ENCODE measurements at regions of chr7 and their contacts with region 1.

Region 1: GRCh38 chr7:120272261-120272660 is 714 bp upstream of the KCND2 start:
- DNase-seq: peak; percentile 39 to 44
- H3K4me3 ChIP-seq: peak overlapping the region; percentile 61
- H3K27ac ChIP-seq: no peak overlapping the region
- H3K4me1 ChIP-seq: no peaks in the 10 kb centered on the region
- H3K27me3 ChIP-seq: 0 out of 2 replicates have a peak, but pooled peaks cover 4% of the 10 kb centered on the region
- CTCF ChIP-seq: peak; percentile 83

Region 2: DNA sequence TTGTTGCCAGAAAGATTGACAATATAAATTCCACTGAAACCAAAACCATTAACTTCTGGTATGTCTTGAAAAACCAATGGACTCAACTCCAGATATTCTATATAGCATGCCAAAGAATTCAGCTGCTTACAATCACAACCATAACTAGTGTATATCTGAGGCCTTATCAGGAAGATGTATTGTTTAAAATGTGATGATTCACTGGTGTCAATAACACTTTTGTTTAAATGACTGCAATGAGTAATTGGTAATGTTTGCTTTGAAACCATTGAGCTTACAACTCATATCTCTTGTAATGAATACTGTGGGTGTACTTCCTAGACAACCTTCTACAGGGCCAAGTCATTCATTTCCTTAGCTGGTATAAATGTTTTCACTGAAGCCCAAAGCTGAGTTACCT is 727.1 kb before region 1 on chr7:
- CTCF ChIA-PET with region 1: no interaction called
- POLR2A ChIA-PET with region 1: no interaction called
- intact Hi-C with region 1: loop called (anchors 5 kb)
- DNase-seq: peak in 1 of 2 experiments; percentile 86
- H3K4me3 ChIP-seq: no peak overlapping the region
- H3K27ac ChIP-seq: no peak overlapping the region
- H3K4me1 ChIP-seq: 0 out of 2 replicates have a peak, but pooled peaks cover 4% of the 10 kb centered on the region
- H3K27me3 ChIP-seq: peaks cover 17% of the 10 kb centered on the region
- CTCF ChIP-seq: no peak

Region 3: GRCh38 chr7:120052884-120053382 is 219.3 kb before region 1 on chr7:
- CTCF ChIA-PET with region 1: no interaction called
- POLR2A ChIA-PET with region 1: no interaction called
- intact Hi-C with region 1: loop called (anchors 1 kb)
- DNase-seq: peak; percentile 79 to 97
- H3K4me3 ChIP-seq: peak overlapping the region; percentile 1; the same call in 1 of the 2 replicates
- H3K27ac ChIP-seq: peak overlapping the region; percentile 70
- H3K4me1 ChIP-seq: peaks cover 45% of the 10 kb centered on the region
- H3K27me3 ChIP-seq: no peaks in the 10 kb centered on the region
- CTCF ChIP-seq: no peak

Region 4: DNA sequence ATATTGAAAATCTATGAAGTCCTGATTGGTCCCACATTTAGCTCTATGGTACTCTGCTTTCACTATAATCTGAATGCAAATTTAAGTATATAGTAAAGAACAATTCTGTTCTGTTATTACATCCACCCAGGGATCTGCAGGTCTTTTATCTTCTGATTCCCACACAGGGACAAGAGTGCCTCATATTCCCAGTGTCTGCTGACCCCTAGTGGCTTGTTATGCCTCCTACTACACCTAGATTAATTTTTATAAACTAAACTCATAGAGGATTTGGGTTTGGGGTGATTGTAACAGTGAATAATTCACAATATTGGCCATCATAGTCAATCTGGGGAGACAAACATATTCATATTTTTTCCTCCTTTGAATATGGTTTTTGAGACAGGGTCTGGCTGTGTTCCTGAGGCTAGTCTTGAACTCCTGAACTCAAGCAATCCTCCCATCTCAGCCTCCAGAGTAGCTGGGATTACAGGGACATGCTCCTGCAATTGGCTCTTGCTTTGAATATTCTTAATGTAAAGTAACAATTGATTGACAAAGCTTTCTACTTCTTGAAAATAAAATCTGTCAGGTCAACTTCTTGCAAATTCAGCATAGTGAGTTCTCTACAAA is 282.8 kb after region 1 on chr7:
- CTCF ChIA-PET with region 1: no interaction called
- POLR2A ChIA-PET with region 1: no interaction called
- intact Hi-C with region 1: loop called (anchors 1 kb)
- DNase-seq: peak; percentile 42 to 47
- H3K4me3 ChIP-seq: no peak overlapping the region
- H3K27ac ChIP-seq: no peak overlapping the region
- H3K4me1 ChIP-seq: no peaks in the 10 kb centered on the region
- H3K27me3 ChIP-seq: no peaks in the 10 kb centered on the region
- CTCF ChIP-seq: peak; percentile 90